ENCODE measurements at regions of chr17 and their contacts with region 1.

Region 1: GRCh38 chr17:48505787-48506645 is 24.8 kb downstream of the HOXB1 start:
- DNase-seq: peak in 1 of 2 donors; percentile 35
- H3K4me3 ChIP-seq: no peak overlapping the region
- H3K27ac ChIP-seq: no peak overlapping the region
- H3K4me1 ChIP-seq: no peaks in the 10 kb centered on the region
- H3K27me3 ChIP-seq: no peaks in the 10 kb centered on the region
- CTCF ChIP-seq: no peak
- POLR2A ChIP-seq: no peak

Region 2: DNA sequence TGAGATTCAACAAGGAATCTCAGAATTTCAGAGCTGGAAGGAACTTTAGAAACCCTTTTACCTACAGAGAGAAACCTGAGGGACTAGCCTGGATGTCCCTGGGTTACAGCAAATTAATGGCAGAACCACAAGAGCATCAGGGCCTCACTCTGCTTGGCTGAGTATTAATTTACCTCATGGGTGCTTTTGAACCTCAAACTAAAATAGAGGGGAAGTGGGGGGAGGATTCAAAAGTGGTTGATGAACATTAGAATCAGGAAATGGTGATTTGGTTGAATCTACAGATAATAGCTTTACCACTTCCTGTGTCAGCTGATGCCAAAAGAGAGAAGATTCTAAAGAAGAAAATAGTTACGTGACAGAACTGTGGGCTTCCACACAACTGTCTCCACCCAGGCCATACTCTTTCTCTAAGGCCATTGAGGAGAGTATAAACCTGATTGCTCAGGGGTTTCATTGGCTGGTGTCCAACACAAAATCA is 64.7 kb before region 1 on chr17:
- intact Hi-C with region 1: loop called (anchors 10 kb)
- DNase-seq: no peak
- H3K4me3 ChIP-seq: no peak overlapping the region
- H3K27ac ChIP-seq: no peak overlapping the region
- H3K4me1 ChIP-seq: no peaks in the 10 kb centered on the region
- H3K27me3 ChIP-seq: peaks cover 0 to 8% of the 10 kb centered on the region in 2 donors
- CTCF ChIP-seq: no peak
- POLR2A ChIP-seq: no peak

Region 3: DNA sequence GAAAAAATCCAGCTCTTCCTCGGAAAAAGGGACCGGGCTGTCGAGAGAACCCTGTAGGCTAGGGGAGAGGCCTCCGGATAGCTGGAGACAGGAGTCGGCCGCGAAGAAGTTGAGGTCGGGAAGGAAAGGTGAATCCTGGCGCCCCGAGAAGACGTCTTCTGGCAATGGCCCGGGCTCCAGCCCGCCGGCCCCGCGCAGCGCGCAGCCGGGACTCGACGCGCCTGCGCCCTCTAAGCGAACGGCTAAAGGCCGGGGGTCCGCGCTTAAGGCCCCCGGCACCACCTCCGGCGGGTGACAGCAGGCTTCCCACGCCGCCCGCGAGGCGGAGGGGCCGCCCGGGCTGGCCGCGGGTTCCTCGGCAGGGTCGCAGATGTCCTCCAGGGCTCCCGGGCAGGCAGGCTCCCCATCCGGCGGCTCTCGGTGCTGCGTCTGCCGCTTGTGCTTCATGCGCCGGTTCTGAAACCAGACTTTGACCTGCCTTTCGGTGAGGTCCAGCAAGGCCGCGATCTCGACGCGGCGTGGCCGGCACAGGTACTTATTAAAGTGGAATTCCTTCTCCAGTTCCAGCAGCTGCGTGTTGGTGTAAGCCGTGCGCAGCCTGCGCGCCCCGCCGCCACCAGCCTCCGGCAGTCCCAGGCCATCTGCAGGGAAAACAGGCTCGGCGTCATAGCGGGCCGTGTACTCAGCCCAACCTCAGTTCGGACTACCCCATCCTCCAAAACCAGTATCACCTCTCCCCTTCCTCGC is 37.3 kb after region 1 on chr17:
- intact Hi-C with region 1: loop called (anchors 1 kb)
- DNase-seq: peak in 1 of 2 donors; percentile 63
- H3K4me3 ChIP-seq: peak overlapping the region; percentile 57 to 95 (median 60)
- H3K27ac ChIP-seq: peak overlapping the region; percentile 93 to 97
- H3K4me1 ChIP-seq: peaks cover 0 to 3% of the 10 kb centered on the region in 2 donors
- H3K27me3 ChIP-seq: peaks cover 0 to 14% of the 10 kb centered on the region in 2 donors
- CTCF ChIP-seq: peak; percentile 29 to 36 (median 34)
- POLR2A ChIP-seq: no peak

Region 4: DNA sequence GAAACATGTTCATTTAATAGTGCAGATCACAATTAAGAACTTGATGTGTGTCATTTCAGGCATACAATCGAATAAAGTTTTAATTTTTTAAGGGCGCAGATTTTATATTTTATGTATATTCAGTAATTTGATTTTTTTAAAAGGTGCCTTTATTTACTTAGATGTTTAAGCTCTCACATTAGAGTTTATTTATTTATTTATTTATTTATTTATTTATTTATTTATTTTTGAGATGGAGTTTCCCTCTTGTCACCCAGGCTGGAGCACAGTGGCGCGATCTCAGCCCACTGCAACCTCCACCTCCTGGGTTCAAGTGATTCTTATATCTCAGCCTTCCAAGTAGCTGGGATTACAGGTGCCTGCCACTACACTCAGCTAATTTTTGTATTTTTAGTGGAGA is 630.3 kb after region 1 on chr17:
- intact Hi-C with region 1: no loop called
- DNase-seq: no peak
- H3K4me3 ChIP-seq: no peak overlapping the region
- H3K27ac ChIP-seq: no peak overlapping the region
- H3K4me1 ChIP-seq: no peaks in the 10 kb centered on the region
- H3K27me3 ChIP-seq: peaks cover 6 to 36% of the 10 kb centered on the region in 2 donors
- CTCF ChIP-seq: no peak
- POLR2A ChIP-seq: no peak